ENCODE measurements at regions of chr16 and their contacts with region 1.

Region 1: DNA sequence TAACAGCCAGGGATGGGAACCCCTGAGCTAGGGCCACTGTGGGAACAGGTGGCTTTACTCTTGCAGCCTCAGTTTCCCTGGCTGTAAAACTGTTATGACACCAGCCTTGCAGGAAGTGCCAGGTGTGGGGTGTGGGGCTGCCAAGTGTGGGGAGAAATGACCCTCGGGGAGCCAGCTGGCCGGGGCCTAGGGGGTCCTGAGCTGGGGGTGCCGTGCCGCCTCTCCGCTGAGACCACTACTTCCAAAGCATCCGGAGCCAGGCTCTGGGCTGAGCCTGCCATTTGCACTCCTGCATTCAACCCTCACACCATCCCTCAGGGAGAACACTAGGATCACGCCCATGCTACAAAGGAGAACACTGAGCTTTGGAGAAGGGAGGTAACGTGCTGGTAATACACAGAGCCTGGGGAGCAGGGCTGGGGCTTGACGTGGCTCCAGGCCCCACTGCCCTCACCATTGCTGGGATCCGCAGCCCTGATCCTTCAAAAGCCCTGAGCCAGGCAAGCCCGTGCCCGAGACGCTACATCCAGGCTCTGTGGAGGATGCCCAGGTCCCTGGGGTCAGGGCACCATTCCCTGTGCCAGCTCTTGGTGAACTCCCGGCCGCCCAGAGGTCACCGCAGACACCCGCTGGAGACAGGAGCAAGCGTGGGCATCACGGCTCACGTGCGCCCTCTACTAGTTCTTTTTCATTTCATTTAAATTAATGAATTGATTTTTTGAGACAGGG is 28.8 kb upstream of the GINS2 start:
- DNase-seq: peak; percentile 34
- H3K4me3 Mint-ChIP-seq: no peak overlapping the region
- H3K27ac Mint-ChIP-seq: no peak overlapping the region
- H3K4me1 Mint-ChIP-seq: no peaks in the 10 kb centered on the region
- H3K27me3 Mint-ChIP-seq: peaks cover 15% of the 10 kb centered on the region

Region 2: DNA sequence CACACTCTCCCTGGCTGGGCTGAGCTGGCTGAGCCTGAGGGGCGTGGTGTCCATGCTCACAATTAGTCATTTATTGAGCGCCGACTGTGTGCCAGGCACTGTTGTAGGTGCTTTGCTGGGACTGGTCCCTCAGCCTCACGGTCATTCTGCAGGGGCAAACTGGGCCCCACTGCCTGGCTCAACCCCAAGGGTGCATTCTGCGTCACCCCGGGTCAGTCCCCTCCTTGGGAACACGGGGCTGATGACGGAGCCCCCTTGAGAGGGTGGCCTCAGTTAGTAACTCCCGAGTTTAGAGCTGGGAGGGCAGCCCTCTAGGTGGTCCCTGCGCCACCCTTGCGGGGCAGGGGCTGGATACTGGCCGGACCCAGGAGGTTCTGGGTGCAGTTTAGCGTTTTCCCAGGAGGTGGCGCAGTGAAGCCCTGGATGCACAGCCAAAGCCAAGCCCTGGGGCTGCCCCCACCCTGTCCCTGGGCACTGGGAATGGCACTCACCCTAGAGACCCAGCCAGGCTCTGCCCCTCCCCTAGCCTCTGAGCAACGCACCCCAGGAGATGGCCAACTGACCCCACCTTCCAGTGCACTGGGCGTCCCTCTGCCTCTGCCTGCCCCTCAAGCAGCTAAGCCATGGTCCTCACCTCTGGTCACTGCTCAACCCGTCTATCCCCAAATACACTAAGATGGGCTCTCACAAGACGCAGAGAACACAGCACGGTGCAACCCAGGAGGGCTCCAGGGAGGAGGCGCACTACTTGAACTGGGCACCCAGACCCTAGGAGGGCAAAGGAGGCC is 347.6 kb before region 1 on chr16:
- intact Hi-C with region 1: loop called (anchors 2 kb)
- DNase-seq: peak; percentile 12
- H3K4me3 Mint-ChIP-seq: no peak overlapping the region
- H3K27ac Mint-ChIP-seq: no peak overlapping the region
- H3K4me1 Mint-ChIP-seq: no peaks in the 10 kb centered on the region
- H3K27me3 Mint-ChIP-seq: no peaks in the 10 kb centered on the region

Region 3: DNA sequence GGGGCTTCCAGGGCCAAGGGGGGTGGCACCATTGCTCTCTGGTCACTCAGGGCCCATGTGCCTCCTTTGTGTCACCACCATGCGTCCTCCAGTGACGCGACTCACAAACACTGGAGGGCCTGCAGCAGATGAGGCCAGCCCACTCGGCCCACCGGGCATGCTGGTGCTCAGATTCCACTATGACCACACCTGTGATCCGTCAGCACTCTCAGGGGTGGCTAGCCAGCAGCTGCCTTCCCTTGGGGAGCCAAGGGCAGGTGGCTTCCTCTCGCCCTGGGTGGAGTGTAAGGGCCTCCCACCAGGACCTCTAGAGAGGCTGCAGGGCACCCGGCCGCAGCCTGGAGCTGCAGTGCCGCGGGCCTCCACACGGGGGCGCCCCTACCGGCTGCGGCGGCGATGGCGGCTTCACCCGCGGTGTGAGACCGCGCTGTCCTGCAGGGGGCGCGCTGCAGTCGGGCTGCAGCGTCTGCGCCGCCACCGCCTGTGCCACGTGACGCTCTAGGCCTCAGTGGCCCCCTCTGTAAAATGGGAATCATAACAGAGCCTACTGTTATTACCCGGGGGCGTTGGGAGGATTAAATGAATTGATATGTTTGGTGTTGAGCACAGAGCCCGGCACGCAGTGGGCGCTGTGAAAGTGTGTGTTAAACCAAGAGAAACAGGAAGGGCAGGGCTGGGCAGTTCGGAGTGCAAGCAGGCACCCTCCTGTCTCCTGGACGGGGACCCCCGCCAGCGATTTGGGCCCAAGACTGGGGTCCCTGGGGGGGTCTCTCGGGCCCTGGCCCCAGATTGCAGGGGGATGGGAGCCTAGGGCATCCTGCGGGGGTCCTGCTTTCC is 296.8 kb before region 1 on chr16:
- intact Hi-C with region 1: loop called (anchors 1 kb)
- DNase-seq: peak; percentile 64
- H3K4me3 Mint-ChIP-seq: no peak overlapping the region
- H3K27ac Mint-ChIP-seq: no peak overlapping the region
- H3K4me1 Mint-ChIP-seq: no peaks in the 10 kb centered on the region
- H3K27me3 Mint-ChIP-seq: peaks cover 3% of the 10 kb centered on the region

Region 4: DNA sequence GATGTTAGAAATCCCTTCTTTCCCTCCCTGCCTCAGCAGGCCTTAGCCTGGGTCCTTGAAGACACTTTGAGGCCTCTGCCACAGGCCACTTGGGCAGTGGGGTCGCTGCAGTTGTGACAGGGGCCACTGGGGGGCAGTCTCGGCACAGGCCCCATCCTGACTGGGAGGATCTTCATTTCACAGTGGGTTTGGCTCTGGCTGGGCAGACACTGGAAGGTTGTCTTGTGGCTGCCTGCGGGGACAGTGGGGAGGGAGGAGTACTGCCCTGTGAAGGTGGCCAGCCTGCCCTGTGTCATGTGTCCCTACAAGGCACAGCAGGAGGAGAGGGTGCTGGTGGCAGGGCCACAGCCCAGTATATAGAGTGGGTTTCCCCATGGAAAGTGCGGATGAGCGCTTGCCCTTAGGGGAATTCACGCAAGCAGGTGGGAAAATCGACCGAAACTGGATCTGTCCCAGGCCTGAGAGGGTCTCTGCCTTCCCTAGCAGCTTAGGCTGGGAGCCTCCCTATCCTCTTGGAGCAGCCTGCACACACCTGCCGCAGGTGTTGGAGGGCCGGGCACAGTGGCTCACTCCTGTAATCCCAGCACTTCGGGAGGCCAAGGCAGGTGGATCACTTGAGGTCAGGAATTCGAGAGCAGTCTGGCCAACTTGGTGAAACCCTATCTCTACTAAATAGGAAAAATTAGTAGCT is 57.6 kb before region 1 on chr16:
- intact Hi-C with region 1: loop called (anchors 1 kb)
- DNase-seq: peak; percentile 37
- H3K4me3 Mint-ChIP-seq: no peak overlapping the region
- H3K27ac Mint-ChIP-seq: no peak overlapping the region
- H3K4me1 Mint-ChIP-seq: no peaks in the 10 kb centered on the region
- H3K27me3 Mint-ChIP-seq: no peaks in the 10 kb centered on the region